Posterior cingulate gyrus (tissue), 11 donors: ENCODE measurements at regions of chr19 and their contacts with region 1.

Region 1: GRCh38 chr19:49546825-49547565 is 19.2 kb downstream of the RCN3 start:
- DNase-seq: peak in 4 of 10 donors; percentile 46 to 70 (median 64)

Region 2: GRCh38 chr19:49391581-49392399 is 155.2 kb before region 1 on chr19:
- intact Hi-C with region 1: loop called (anchors 1 kb)
- DNase-seq: peak; percentile 49 to 97 (median 75)

Region 3: GRCh38 chr19:49473868-49474544 is 73.0 kb before region 1 on chr19 and contains the start of gene FLT3LG:
- intact Hi-C with region 1: loop called (anchors 1 kb)
- DNase-seq: peak in 7 of 10 donors; percentile 39 to 90 (median 68)

Region 4: GRCh38 chr19:49487277-49488045 is 59.5 kb before region 1 on chr19 and contains the start of gene RPL13A:
- intact Hi-C with region 1: no loop called
- DNase-seq: peak; percentile 97 to 100 (median 99)

Region 5: DNA sequence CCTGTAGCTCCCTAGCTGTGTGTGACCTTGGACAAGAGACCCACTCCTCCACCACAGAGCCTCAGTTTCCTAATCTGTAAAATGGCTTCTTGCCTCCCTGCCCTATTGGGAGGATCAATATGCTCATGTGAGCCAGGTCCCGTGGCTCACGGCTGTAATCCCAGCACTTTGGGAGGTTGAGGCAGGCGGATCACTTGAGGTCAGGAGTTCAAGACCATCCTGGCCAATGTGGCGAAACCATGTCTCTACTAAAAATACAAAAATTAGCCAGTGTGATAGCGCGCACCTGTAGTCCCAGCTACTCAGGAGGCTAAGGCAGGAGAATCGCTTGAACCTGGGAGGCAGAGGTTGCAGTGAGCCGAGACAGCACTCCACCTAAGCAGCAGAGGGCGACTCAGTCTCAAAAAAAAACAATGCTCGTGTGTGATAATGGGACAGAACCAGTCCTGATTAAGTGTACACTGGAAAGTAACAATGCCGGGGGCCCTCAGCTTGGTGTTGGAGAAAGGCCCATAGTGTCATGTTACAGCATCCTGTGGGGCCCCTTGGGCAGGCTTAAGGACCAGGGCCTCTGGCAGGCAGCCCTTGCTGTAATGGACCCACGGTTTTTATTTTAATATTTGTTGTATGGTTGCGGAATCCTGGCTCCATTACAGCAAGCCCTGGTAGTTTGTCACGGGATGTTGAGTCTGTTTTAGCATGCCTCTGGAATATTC is 44.0 kb before region 1 on chr19:
- intact Hi-C with region 1: loop called (anchors 2 kb)
- DNase-seq: no peak